Naive thymus-derived CD4-positive, alpha-beta T cell (primary cell): ENCODE measurements at regions of chr17 and their contacts with region 1.

Region 1: GRCh38 chr17:59435238-59435637 is 103.8 kb downstream of the YPEL2 start:
- DNase-seq: no peak
- ATAC-seq: peak; percentile 40
- H3K4me3 ChIP-seq: no peak overlapping the region
- H3K4me3 Mint-ChIP-seq: peak overlapping the region in 1 of 10 donors; percentile 53
- H3K27ac ChIP-seq: no peak overlapping the region
- H3K27ac Mint-ChIP-seq: peak overlapping the region in 1 of 9 donors; percentile 45
- H3K4me1 ChIP-seq: peaks cover 0 to 11% of the 10 kb centered on the region in 2 donors
- H3K4me1 Mint-ChIP-seq: peaks cover 0 to 53% (median 17%) of the 10 kb centered on the region in 7 donors
- H3K27me3 ChIP-seq: no peaks in the 10 kb centered on the region
- H3K27me3 Mint-ChIP-seq: peaks cover 0 to 12% (median 0%) of the 10 kb centered on the region in 5 donors

Region 2: DNA sequence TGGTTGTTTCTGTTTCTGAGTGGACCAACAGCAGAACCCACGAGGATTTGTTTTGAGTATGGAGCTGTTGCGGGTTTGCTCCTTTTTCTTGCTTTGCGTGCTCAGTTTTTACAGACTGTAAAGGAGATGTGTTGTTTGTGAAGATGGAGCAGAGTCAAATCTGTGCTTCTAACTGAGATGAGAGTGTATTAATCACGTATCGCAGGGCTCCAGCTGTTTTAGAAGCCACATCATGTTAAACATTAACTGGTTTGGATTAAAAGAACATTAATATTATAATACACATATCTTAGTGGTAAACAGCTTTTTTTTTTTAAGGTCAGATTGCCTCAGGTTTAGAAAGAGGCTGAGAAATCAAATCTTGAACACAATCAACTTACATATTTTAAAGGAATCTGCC is 34.4 kb before region 1 on chr17:
- CTCF ChIA-PET with region 1: interaction called, 4 read pairs
- POLR2A ChIA-PET with region 1: no interaction called
- intact Hi-C with region 1: loop called in 1 of 2 experiments (anchors 5 kb)
- DNase-seq: no peak
- ATAC-seq: no peak
- H3K4me3 ChIP-seq: no peak overlapping the region
- H3K4me3 Mint-ChIP-seq: no peak overlapping the region
- H3K27ac ChIP-seq: no peak overlapping the region
- H3K27ac Mint-ChIP-seq: peak overlapping the region in 1 of 9 donors; percentile 36
- H3K4me1 ChIP-seq: no peaks in the 10 kb centered on the region
- H3K4me1 Mint-ChIP-seq: peaks cover 0 to 7% (median 0%) of the 10 kb centered on the region in 7 donors
- H3K27me3 ChIP-seq: no peaks in the 10 kb centered on the region
- H3K27me3 Mint-ChIP-seq: no peaks in the 10 kb centered on the region

Region 3: GRCh38 chr17:59479158-59479557 is 43.9 kb after region 1 on chr17:
- CTCF ChIA-PET with region 1: no interaction called
- POLR2A ChIA-PET with region 1: no interaction called
- intact Hi-C with region 1: no loop called
- DNase-seq: no peak
- ATAC-seq: no peak
- H3K4me3 ChIP-seq: no peak overlapping the region
- H3K4me3 Mint-ChIP-seq: no peak overlapping the region
- H3K27ac ChIP-seq: no peak overlapping the region
- H3K27ac Mint-ChIP-seq: no peak overlapping the region
- H3K4me1 ChIP-seq: no peaks in the 10 kb centered on the region
- H3K4me1 Mint-ChIP-seq: peaks cover 0 to 8% (median 5%) of the 10 kb centered on the region in 7 donors
- H3K27me3 ChIP-seq: no peaks in the 10 kb centered on the region
- H3K27me3 Mint-ChIP-seq: peaks cover 0 to 8% (median 0%) of the 10 kb centered on the region in 5 donors

Region 4: GRCh38 chr17:59505610-59506276 is 70.5 kb after region 1 on chr17:
- CTCF ChIA-PET with region 1: no interaction called
- POLR2A ChIA-PET with region 1: no interaction called
- intact Hi-C with region 1: no loop called
- DNase-seq: no peak
- ATAC-seq: no peak
- H3K4me3 ChIP-seq: no peak overlapping the region
- H3K4me3 Mint-ChIP-seq: no peak overlapping the region
- H3K27ac ChIP-seq: no peak overlapping the region
- H3K27ac Mint-ChIP-seq: no peak overlapping the region
- H3K4me1 ChIP-seq: no peaks in the 10 kb centered on the region
- H3K4me1 Mint-ChIP-seq: no peaks in the 10 kb centered on the region
- H3K27me3 ChIP-seq: no peaks in the 10 kb centered on the region
- H3K27me3 Mint-ChIP-seq: peaks cover 0 to 5% (median 4%) of the 10 kb centered on the region in 5 donors